ENCODE measurements at regions of chr4 and their contacts with region 1.

Region 1: DNA sequence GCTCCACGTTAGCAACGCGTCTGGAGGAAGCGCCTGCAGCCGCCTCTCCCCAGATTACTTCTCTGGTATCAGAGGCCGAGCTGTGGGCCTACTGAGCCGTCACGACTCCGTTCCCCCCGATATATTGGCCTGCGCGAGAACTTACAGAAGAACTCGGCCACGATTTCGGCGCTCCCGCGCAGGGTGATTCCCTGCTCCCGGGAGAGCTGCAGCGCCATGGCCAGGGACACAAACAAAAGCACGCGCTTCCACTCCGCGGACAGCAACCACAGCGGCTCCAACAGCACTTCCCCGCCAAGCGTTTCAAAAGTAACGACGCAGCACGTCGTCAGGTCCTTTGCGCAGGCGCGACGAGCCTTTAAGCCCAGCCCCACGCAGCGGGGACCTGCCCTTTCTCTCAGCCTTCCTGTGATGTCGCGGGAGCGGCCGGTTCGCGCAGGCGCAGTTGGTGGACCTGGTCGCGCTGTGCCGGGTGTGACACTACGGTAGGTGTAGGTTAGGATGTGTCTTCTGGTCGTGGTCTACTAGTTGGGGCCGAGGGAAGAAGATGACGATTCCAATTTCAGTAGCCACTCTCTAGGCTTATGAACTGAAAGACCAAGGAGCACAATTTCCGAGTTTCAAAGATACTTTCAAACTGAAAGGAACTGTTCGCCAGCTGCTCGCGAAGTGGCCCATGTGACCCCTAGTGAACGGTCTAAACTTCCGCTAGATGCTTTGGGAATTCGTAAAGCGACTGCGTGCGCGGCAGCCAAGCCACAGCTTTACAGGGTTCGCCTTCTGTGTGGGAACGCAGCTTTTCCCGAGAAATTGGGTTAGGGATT is at the start of gene MAD2L1:
- DNase-seq: peak; percentile 97 to 99 (median 98)
- ATAC-seq: peak; percentile 95
- H3K4me3 ChIP-seq: peak within 1 kb of the TSS; percentile 92
- H3K4me3 Mint-ChIP-seq: peak within 1 kb of the TSS; percentile 88 to 99 (median 96)
- H3K27ac ChIP-seq: peak within 1 kb of the TSS; percentile 95
- H3K27ac Mint-ChIP-seq: peak within 1 kb of the TSS; percentile 93 to 99 (median 99)
- H3K4me1 ChIP-seq: peaks cover 24 to 33% of the 10 kb centered on the region in 2 donors
- H3K4me1 Mint-ChIP-seq: peaks cover 24 to 76% (median 66%) of the 10 kb centered on the region in 7 donors
- H3K27me3 ChIP-seq: no peaks in the 10 kb centered on the region
- H3K27me3 Mint-ChIP-seq: peaks cover 0 to 3% (median 0%) of the 10 kb centered on the region in 5 donors
- total RNA-seq, gene MAD2L1: 5.1 to 44.0 (median 7.6) TPM

Region 2: GRCh38 chr4:118278473-118279274 is 1788.1 kb before region 1 on chr4:
- CTCF ChIA-PET with region 1: no interaction called
- POLR2A ChIA-PET with region 1: no interaction called
- intact Hi-C with region 1: loop called in 1 of 2 experiments (anchors 1 kb)
- DNase-seq: peak; percentile 91 to 99 (median 95)
- ATAC-seq: peak; percentile 98
- H3K4me3 ChIP-seq: peak overlapping the region; percentile 80
- H3K4me3 Mint-ChIP-seq: peak overlapping the region; percentile 91 to 98 (median 94)
- H3K27ac ChIP-seq: peak overlapping the region; percentile 94
- H3K27ac Mint-ChIP-seq: peak overlapping the region; percentile 93 to 99 (median 98)
- H3K4me1 ChIP-seq: peaks cover 16 to 20% of the 10 kb centered on the region in 2 donors
- H3K4me1 Mint-ChIP-seq: peaks cover 24 to 58% (median 48%) of the 10 kb centered on the region in 7 donors
- H3K27me3 ChIP-seq: no peaks in the 10 kb centered on the region
- H3K27me3 Mint-ChIP-seq: no peaks in the 10 kb centered on the region

Region 3: DNA sequence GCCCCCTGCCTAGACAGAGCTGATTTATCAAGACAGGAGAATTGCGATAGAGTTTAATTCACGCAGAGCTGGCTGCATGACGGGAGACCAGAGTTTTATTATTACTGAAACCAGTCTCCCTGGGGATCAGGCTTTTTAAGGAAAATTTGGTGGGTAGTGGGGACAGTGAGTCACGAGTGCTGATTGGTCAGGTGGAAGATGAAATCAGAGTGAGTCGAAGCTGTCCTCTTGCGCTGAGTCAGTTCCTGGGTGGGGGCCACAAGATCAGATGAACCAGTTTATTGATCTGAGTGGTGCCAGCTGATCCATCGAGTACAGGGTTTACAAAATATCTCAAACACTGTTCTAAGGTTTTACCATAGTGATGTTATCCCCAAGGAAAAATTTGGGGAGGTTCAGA is 894.5 kb before region 1 on chr4:
- CTCF ChIA-PET with region 1: no interaction called
- POLR2A ChIA-PET with region 1: no interaction called
- intact Hi-C with region 1: no loop called
- DNase-seq: no peak
- ATAC-seq: no peak
- H3K4me3 ChIP-seq: no peak overlapping the region
- H3K4me3 Mint-ChIP-seq: no peak overlapping the region
- H3K27ac ChIP-seq: no peak overlapping the region
- H3K27ac Mint-ChIP-seq: no peak overlapping the region
- H3K4me1 ChIP-seq: no peaks in the 10 kb centered on the region
- H3K4me1 Mint-ChIP-seq: peaks cover 0 to 3% (median 0%) of the 10 kb centered on the region in 7 donors
- H3K27me3 ChIP-seq: no peaks in the 10 kb centered on the region
- H3K27me3 Mint-ChIP-seq: peaks cover 0 to 9% (median 0%) of the 10 kb centered on the region in 5 donors

Region 4: GRCh38 chr4:119692001-119692400 is 374.7 kb before region 1 on chr4:
- CTCF ChIA-PET with region 1: no interaction called
- POLR2A ChIA-PET with region 1: no interaction called
- intact Hi-C with region 1: no loop called
- DNase-seq: no peak
- ATAC-seq: no peak
- H3K4me3 ChIP-seq: no peak overlapping the region
- H3K4me3 Mint-ChIP-seq: no peak overlapping the region
- H3K27ac ChIP-seq: no peak overlapping the region
- H3K27ac Mint-ChIP-seq: no peak overlapping the region
- H3K4me1 ChIP-seq: no peaks in the 10 kb centered on the region
- H3K4me1 Mint-ChIP-seq: no peaks in the 10 kb centered on the region
- H3K27me3 ChIP-seq: no peaks in the 10 kb centered on the region
- H3K27me3 Mint-ChIP-seq: peaks cover 2 to 39% (median 22%) of the 10 kb centered on the region in 5 donors

Region 5: GRCh38 chr4:120049732-120050494 is 16.8 kb before region 1 on chr4:
- CTCF ChIA-PET with region 1: no interaction called
- POLR2A ChIA-PET with region 1: interaction called, 3 read pairs
- intact Hi-C with region 1: loop called in 1 of 2 experiments (anchors 1 kb)
- DNase-seq: peak; percentile 41 to 78 (median 64)
- ATAC-seq: peak; percentile 97
- H3K4me3 ChIP-seq: no peak overlapping the region
- H3K4me3 Mint-ChIP-seq: peak overlapping the region in 7 of 10 donors; percentile 22 to 84 (median 33)
- H3K27ac ChIP-seq: no peak overlapping the region
- H3K27ac Mint-ChIP-seq: peak overlapping the region in 1 of 9 donors; percentile 3
- H3K4me1 ChIP-seq: no peaks in the 10 kb centered on the region
- H3K4me1 Mint-ChIP-seq: peaks cover 0 to 5% (median 4%) of the 10 kb centered on the region in 7 donors
- H3K27me3 ChIP-seq: no peaks in the 10 kb centered on the region
- H3K27me3 Mint-ChIP-seq: no peaks in the 10 kb centered on the region

Region 6: DNA sequence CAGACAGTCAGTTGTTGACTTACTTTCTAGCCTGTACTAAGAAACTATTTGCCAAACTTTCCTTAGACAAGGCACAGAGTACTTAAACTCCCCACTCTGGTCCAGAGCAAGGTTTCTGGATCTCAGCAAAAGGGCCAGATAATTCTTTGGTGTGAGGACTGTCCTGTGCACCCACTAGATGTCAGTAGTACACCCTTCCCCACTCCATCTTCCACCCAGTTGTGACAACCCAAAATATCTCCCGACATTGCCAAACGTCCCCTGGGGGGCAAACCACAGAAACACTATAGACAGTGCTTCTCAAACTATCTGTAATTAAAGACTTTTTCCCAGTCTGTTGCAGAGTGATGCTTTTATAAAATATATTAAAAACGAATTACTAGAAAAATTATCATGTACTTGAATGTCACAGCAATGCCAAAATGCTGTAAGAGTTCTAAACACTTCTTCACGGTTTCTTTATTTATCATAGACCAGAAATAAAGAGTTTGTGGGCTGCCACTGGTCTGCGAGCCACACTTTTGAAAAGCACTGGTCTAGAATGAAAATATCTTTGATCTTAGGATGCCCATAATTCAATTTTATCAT is 652.3 kb after region 1 on chr4:
- CTCF ChIA-PET with region 1: no interaction called
- POLR2A ChIA-PET with region 1: no interaction called
- intact Hi-C with region 1: loop called in 1 of 2 experiments (anchors 1 kb)
- DNase-seq: peak in 6 of 9 donors; percentile 6 to 40 (median 36)
- ATAC-seq: peak; percentile 82
- H3K4me3 ChIP-seq: no peak overlapping the region
- H3K4me3 Mint-ChIP-seq: no peak overlapping the region
- H3K27ac ChIP-seq: no peak overlapping the region
- H3K27ac Mint-ChIP-seq: no peak overlapping the region
- H3K4me1 ChIP-seq: no peaks in the 10 kb centered on the region
- H3K4me1 Mint-ChIP-seq: peaks cover 0 to 2% (median 0%) of the 10 kb centered on the region in 7 donors
- H3K27me3 ChIP-seq: no peaks in the 10 kb centered on the region
- H3K27me3 Mint-ChIP-seq: peaks cover 0 to 16% (median 0%) of the 10 kb centered on the region in 5 donors

Region 7: GRCh38 chr4:121252224-121252806 is 1185.6 kb after region 1 on chr4:
- CTCF ChIA-PET with region 1: no interaction called
- POLR2A ChIA-PET with region 1: no interaction called
- intact Hi-C with region 1: loop called in 1 of 2 experiments (anchors 1 kb)
- DNase-seq: peak in 8 of 9 donors; percentile 26 to 49 (median 44)
- ATAC-seq: peak; percentile 45
- H3K4me3 ChIP-seq: no peak overlapping the region
- H3K4me3 Mint-ChIP-seq: no peak overlapping the region
- H3K27ac ChIP-seq: no peak overlapping the region
- H3K27ac Mint-ChIP-seq: peak overlapping the region in 2 of 9 donors; percentile 6 to 58
- H3K4me1 ChIP-seq: peaks cover 14 to 49% of the 10 kb centered on the region in 2 donors
- H3K4me1 Mint-ChIP-seq: peaks cover 12 to 65% (median 61%) of the 10 kb centered on the region in 7 donors
- H3K27me3 ChIP-seq: no peaks in the 10 kb centered on the region
- H3K27me3 Mint-ChIP-seq: no peaks in the 10 kb centered on the region

Region 8: DNA sequence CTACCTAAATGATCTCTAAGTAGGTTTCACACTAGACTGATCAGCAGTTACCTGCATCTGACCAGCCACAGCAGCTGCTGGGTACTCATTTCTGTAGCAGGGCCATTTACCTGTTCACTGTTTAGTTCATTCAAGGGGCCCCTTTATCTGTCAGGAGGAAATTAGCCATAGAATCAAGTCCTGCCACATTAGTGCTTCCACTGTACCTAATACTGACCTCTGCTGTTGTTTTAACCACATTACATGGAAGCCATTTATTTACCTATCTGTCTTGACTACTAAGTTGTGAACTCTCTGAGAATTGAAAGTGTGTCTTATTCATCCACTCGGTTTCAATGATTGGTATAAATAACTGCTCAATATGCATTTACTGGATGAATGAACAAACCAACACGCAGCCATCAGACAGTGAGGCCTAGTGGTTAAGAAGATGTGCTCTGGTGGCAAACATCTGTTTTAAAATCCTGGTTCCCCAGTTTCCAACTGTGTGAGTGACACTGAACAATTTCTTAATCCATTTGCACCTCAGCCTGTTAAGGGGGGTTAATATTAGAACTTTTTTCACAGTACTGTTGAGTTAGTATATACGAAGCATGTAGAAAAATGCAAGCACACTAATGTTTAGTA is 1660.0 kb after region 1 on chr4:
- CTCF ChIA-PET with region 1: no interaction called
- POLR2A ChIA-PET with region 1: no interaction called
- intact Hi-C with region 1: loop called in 1 of 2 experiments (anchors 1 kb)
- DNase-seq: peak in 6 of 9 donors; percentile 3 to 50 (median 32)
- ATAC-seq: peak; percentile 93
- H3K4me3 ChIP-seq: no peak overlapping the region
- H3K4me3 Mint-ChIP-seq: no peak overlapping the region
- H3K27ac ChIP-seq: no peak overlapping the region
- H3K27ac Mint-ChIP-seq: no peak overlapping the region
- H3K4me1 ChIP-seq: no peaks in the 10 kb centered on the region
- H3K4me1 Mint-ChIP-seq: peaks cover 0 to 4% (median 0%) of the 10 kb centered on the region in 7 donors
- H3K27me3 ChIP-seq: no peaks in the 10 kb centered on the region
- H3K27me3 Mint-ChIP-seq: peaks cover 0 to 10% (median 5%) of the 10 kb centered on the region in 5 donors